Ascending aorta (tissue), 2 donors: ENCODE measurements at regions of chr14 and their contacts with region 1.

Region 1: DNA sequence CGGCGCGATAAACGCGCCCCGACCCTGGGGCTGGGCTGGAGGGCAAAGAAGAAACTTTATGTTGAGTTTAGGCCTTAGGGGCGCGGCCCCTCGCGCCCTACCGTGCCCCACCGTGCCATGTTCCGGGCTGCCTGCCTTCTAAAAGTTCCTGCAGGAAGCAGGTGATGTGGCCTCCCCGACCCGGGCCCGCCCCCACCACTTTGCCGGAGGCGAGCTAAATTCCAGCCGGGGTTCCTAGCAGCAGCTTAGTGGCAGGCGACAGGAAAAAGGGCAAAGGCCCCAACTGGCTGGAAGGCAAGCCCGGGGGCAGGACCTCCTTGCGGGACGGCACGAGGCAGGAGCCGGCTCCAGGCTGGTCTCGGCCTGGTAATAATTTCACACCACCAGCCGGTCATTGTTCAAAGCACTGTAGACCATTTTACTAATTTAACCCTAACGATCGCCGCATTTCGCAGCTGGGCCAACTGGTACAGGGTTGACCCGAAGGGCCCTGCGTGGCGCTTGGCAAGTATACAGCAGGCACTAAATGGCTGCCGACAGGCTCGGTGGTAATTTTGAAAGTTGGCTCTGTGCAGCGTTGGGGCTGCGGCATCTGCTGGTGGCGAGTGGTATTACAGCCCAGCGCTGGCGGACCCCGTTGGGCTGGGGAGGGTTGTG is 895 bp upstream of the CCDC88C start:
- DNase-seq: peak in 1 of 2 donors; percentile 75
- H3K4me3 ChIP-seq: peak overlapping the region; percentile 56 to 77
- H3K27ac ChIP-seq: no peak overlapping the region
- H3K4me1 ChIP-seq: peaks cover 6 to 10% of the 10 kb centered on the region in 2 donors
- H3K27me3 ChIP-seq: peaks cover 4% of the 10 kb centered on the region
- CTCF ChIP-seq: peak; percentile 89 to 96 (median 96)

Region 2: DNA sequence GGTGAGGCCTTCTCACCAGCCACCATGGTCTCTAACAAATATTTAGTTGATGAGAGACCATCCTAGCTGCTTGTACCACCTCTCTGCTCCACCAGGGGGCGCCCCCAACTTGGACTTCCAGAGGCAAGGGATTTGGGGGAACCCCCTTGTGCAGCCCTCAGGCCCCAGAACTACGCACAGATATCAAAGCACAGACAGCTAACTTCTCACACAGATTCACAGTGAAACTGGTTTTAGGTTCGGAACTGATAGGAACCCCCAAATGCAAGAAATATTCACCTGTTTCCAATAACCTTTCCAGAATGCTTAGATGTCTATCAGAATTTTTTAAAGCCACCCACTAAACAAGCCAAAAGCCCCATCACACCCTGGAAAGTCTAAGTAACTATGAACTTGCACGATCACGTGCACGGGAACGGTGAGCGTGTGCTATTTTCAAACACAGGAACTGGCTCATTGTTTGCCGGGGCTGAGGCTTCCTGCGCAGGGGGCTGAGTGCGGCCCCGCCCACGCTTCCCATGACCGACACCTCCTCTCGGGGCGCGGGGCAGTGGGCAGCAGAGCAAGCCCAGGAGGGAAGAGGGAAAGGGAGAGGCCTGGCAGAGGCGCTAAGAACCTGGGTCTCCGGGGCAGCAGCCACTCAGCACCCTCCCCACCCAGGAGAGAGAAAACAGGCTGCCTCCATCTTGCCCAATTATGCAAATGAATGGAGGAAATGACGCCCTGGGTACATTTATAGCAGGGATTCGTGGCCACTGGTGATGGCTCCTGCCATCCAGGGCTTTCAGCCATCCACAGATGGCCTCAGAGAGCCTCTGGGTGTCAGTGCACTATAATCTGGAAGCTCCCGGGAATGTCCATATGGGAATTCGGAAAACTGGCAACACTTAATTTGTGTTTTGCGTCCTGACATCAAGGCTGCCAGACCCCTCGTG is 94.6 kb before region 1 on chr14:
- intact Hi-C with region 1: loop called (anchors 1 kb)
- DNase-seq: peak; percentile 27 to 91
- H3K4me3 ChIP-seq: peak overlapping the region; percentile 24 to 45
- H3K27ac ChIP-seq: peak overlapping the region; percentile 50 to 64
- H3K4me1 ChIP-seq: no peaks in the 10 kb centered on the region
- H3K27me3 ChIP-seq: no peaks in the 10 kb centered on the region
- CTCF ChIP-seq: peak; percentile 87 to 92 (median 88)

Region 3: DNA sequence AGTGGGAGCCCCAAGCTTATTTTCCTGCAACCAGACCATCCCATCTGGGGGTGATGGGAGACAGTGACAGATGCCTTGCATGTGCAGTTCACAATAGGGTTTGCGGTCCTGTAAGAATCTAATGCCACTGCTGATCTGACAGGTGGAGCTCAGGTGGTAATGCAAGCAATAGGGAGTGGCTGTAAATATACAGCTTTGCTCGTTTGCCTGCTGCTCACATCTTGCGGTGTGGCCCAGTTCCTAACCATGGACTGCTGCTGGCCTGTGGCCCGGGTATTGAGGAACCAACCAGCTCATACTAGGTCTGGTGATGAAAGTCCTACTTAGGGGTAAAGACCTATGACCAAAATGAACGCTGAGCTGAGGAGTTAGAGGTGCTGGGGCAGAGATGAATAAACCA is 35.2 kb after region 1 on chr14:
- intact Hi-C with region 1: no loop called
- DNase-seq: no peak
- H3K4me3 ChIP-seq: no peak overlapping the region
- H3K27ac ChIP-seq: no peak overlapping the region
- H3K4me1 ChIP-seq: no peaks in the 10 kb centered on the region
- H3K27me3 ChIP-seq: no peaks in the 10 kb centered on the region
- CTCF ChIP-seq: no peak